Endothelial cell of umbilical vein (primary cell): ENCODE measurements at regions of chr15 and their contacts with region 1.

Region 1: DNA sequence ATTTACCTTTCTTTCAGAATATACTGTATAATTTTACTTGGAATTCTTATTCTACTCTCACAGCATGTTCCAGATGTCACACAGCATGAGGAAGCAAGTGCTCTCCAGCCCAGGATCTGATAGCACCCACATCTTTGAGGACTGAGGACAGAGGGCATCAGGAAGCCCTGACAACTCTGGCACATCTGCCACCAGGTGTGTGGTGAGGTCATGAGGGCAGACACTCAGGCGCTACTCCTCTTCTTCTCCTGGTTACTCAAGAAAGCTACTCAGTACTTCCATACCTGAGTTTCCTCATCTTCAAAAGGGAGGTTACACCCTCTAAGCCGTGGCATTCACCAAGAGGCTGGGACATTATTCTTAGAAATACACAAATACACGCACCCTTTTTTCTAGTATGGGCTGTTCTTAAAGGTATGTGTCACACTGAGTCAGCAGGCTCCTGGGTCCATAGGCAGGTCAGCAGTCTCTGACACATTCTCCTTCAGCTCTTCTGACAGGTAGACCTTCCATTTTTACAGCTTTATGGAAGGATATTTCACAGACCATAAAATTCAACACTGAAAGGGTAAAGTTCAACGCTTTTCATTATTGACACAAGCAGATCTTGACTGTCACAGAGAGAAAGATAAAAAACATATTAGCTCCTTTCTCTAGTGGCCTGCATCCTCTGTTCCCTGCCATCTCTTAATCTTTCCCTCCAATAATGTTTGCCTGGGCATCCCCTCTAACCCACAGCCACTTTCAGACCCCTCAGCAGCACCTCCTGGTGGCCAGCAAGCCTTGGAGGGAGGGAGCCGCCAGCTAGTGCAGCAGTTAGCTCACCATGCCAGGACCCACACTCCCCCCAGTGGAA is 103.2 kb upstream of the TJP1 start:
- DNase-seq: peak; percentile 72
- H3K4me3 ChIP-seq: no peak overlapping the region
- H3K27ac ChIP-seq: no peak overlapping the region
- H3K4me1 ChIP-seq: peaks cover 12% of the 10 kb centered on the region
- H3K27me3 ChIP-seq: no peaks in the 10 kb centered on the region
- CTCF ChIP-seq: peak; percentile 88 to 90
- POLR2A ChIP-seq: no peak

Region 2: DNA sequence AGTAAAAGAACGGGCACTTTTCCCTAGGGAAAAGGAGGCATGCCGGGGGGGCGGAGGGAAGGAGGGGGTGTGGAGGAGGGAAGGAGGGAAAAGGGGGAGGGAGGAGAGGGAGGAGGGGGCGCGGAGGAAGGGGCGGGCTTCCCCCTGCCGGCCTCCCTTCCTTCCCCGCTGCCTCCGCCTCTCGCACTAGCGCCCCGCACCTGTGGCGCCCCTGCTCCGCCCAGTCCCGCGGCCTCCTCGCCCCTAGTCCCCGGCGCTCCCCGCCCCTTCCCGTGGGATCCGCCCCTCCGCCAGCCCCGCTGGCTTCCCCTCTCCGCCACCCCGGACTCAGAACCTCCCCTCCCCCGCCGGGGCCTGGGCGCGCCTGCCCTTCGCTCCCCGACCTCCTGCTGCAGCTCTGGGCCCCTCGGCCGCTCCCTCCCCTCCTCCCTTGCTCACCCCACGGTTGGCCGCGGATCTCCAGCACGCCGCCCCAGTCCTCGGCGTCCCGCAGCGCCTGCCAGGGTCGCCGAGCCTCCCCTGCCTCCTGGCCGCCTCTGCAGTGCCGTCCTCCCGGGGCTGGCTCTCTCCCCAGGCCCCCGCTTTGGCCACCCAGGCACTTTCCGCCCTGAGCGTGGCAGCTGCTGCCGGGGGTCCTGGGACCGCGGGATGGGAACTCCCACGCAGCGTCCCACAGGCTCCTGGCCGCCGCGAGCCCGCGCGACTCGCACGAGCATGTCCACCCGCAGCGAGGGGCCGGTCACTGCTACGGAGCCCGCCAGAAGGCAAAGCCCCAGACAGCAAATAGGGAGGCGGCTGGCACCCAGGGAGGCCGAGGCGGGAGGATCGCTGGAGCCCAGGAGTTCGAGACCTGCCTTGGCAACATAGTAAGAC is 250.6 kb before region 1 on chr15:
- CTCF ChIA-PET with region 1: interaction called, 5 read pairs
- POLR2A ChIA-PET with region 1: no interaction called
- dilution Hi-C with region 1: no loop called
- intact Hi-C with region 1: loop called (anchors 5 kb)
- DNase-seq: peak; percentile 45
- H3K4me3 ChIP-seq: peak overlapping the region; percentile 49 to 78 (median 62)
- H3K27ac ChIP-seq: peak overlapping the region; percentile 17
- H3K4me1 ChIP-seq: peaks cover 13% of the 10 kb centered on the region
- H3K27me3 ChIP-seq: no peaks in the 10 kb centered on the region
- CTCF ChIP-seq: no peak
- POLR2A ChIP-seq: no peak

Region 3: GRCh38 chr15:29704950-29705597 is 220.4 kb before region 1 on chr15:
- CTCF ChIA-PET with region 1: no interaction called
- POLR2A ChIA-PET with region 1: no interaction called
- dilution Hi-C with region 1: no loop called
- intact Hi-C with region 1: no loop called
- DNase-seq: no peak
- H3K4me3 ChIP-seq: no peak overlapping the region
- H3K27ac ChIP-seq: no peak overlapping the region
- H3K4me1 ChIP-seq: no peaks in the 10 kb centered on the region
- H3K27me3 ChIP-seq: no peaks in the 10 kb centered on the region
- CTCF ChIP-seq: no peak
- POLR2A ChIP-seq: no peak

Region 4: DNA sequence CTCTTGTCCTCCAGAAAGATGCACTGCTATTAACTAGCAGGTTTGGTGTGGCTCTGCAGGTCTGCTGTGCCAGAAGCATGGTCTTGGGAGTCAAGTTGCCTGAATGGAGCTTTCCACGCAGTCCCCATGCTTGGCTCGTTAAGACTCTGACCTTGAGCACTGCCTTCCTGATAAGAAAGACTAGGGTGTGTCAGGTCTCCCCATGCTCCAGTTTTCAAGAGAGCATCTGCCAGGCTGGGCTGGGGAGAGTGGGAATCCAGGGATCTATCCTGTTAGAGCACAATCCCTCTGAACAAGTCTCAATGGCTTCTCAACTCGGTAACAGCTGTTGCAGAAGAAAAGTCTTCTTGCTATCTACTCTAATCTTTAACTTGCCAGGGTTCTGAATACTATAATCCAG is 201.4 kb before region 1 on chr15:
- CTCF ChIA-PET with region 1: interaction called, 15 read pairs
- POLR2A ChIA-PET with region 1: no interaction called
- dilution Hi-C with region 1: no loop called
- intact Hi-C with region 1: no loop called
- DNase-seq: no peak
- H3K4me3 ChIP-seq: no peak overlapping the region
- H3K27ac ChIP-seq: no peak overlapping the region
- H3K4me1 ChIP-seq: no peaks in the 10 kb centered on the region
- H3K27me3 ChIP-seq: no peaks in the 10 kb centered on the region
- CTCF ChIP-seq: no peak
- POLR2A ChIP-seq: no peak

Region 5: GRCh38 chr15:29765898-29766527 is 159.4 kb before region 1 on chr15:
- CTCF ChIA-PET with region 1: interaction called, 11 read pairs
- POLR2A ChIA-PET with region 1: no interaction called
- dilution Hi-C with region 1: no loop called
- intact Hi-C with region 1: no loop called
- DNase-seq: no peak
- H3K4me3 ChIP-seq: no peak overlapping the region
- H3K27ac ChIP-seq: no peak overlapping the region
- H3K4me1 ChIP-seq: no peaks in the 10 kb centered on the region
- H3K27me3 ChIP-seq: no peaks in the 10 kb centered on the region
- CTCF ChIP-seq: no peak
- POLR2A ChIP-seq: no peak

Region 6: DNA sequence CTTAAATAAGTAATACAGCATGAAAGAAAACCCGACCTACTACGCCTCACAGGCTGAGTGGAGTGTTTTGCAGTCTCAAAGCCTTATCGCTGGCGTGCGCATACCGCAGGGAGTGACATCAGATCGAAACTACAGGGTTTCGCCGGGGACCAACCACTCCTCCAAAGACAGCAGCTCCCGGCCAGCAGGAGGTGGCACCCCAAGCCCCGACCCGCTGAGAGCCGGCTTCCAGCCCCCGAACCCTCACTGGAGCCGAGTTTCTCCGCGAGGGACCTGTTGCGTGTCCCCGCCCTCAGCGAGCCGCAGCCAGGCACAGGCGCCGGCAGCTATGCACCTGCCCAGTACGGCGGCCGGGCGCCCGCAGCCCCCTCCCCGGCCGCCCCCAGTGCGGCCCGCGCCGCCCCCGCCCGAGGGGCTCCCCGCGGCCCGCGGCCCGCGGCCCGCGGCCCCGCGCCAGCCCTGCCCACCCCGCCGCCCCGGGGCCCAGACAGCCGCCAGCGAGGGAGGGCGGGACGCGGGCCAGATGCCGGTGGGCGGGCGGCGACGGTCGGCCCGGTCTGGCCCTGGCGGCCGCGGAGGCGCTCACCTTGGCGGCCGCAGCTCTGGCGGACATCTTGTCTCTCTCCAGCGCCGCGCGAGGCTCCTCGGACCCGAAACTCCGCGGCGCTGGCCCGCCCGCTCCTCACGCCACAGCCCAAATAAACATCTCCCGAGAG is 103.9 kb before region 1 on chr15:
- CTCF ChIA-PET with region 1: interaction called, 40 read pairs
- POLR2A ChIA-PET with region 1: interaction called, 5 read pairs
- dilution Hi-C with region 1: no loop called
- intact Hi-C with region 1: loop called (anchors 1 kb)
- DNase-seq: peak; percentile 89
- H3K4me3 ChIP-seq: peak overlapping the region; percentile 98 to 100 (median 99)
- H3K27ac ChIP-seq: peak overlapping the region; percentile 94
- H3K4me1 ChIP-seq: peaks cover 45% of the 10 kb centered on the region
- H3K27me3 ChIP-seq: peaks cover 0 to 3% of the 10 kb centered on the region in 2 experiments
- CTCF ChIP-seq: peak; percentile 9 to 46
- POLR2A ChIP-seq: no peak

Region 7: DNA sequence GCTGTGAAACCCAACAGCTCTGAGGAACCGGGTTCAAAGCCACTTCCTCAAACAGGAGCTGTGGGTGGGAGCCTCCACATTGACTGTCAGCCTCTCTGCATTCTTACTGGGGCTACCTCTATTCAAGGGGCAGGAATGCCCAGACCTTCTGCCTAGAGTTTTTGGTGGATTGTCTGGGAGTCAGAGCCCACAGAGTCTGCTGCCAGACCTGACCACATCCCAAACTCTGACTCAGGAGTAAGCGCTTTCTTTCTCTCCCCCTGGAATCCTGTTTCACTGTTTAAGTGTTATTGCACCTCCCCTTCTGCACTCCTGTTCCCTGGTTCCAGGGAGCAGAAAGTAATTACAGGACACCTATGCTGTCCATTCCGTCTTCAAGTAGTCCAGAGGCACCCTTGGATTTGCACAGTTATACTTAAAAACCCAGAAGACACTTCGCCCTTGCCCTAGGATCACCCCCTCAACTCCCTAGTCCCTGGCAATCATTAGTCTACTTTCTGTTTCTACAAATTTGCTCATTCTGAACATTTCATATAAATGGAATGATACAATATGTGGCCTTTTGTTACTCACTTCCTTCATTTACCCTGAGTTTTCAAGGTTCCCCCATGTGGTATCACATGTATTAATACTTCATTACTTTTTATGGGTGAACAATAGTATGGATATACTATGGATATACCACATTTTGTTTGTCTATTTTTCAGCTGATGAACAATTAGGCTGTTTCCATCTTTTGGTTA is 65.3 kb before region 1 on chr15:
- CTCF ChIA-PET with region 1: interaction called, 15 read pairs
- POLR2A ChIA-PET with region 1: no interaction called
- dilution Hi-C with region 1: no loop called
- intact Hi-C with region 1: no loop called
- DNase-seq: no peak
- H3K4me3 ChIP-seq: no peak overlapping the region
- H3K27ac ChIP-seq: no peak overlapping the region
- H3K4me1 ChIP-seq: no peaks in the 10 kb centered on the region
- H3K27me3 ChIP-seq: peaks cover 0 to 2% of the 10 kb centered on the region in 2 experiments
- CTCF ChIP-seq: no peak
- POLR2A ChIP-seq: no peak

Region 8: DNA sequence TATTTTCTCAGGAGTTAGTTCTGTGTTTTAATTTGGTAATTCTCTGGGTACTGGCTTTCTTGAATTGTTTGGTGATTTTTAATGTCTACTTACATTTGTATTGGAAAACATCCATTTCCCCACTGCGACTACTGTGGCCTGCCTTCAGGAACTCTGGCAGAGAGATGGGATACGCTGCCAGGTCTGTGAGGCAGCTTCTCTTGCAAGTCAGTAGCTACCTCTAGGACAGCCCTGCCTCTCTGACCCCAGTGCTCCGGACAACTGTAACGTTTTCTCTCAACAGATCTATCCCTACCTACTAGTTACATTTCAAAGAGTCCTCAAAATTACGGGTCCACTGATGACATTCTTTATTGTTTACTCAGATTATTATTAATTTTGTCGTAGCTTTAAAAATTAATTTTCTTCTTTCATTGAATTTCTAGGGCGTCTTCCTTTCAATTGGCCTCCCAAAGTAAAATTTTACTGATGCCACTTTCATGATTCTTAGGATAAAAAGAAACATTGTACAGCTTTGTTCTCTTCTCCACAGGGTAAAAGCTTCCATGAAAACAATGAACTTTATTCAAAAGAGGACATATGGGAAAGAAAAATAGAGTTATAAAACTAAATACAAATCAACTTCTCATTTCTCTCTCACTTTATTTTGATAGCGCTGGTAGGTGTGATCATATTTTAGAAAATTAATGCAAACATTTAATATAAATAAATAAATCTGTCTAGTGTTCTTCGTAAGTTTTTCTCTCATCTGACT is 34.1 kb after region 1 on chr15:
- CTCF ChIA-PET with region 1: no interaction called
- POLR2A ChIA-PET with region 1: no interaction called
- dilution Hi-C with region 1: no loop called
- intact Hi-C with region 1: no loop called
- DNase-seq: no peak
- H3K4me3 ChIP-seq: no peak overlapping the region
- H3K27ac ChIP-seq: no peak overlapping the region
- H3K4me1 ChIP-seq: no peaks in the 10 kb centered on the region
- H3K27me3 ChIP-seq: peaks cover 5 to 6% of the 10 kb centered on the region in 2 experiments
- CTCF ChIP-seq: no peak
- POLR2A ChIP-seq: no peak

Region 9: GRCh38 chr15:30073915-30074314 is 148.5 kb after region 1 on chr15:
- CTCF ChIA-PET with region 1: interaction called, 17 read pairs
- POLR2A ChIA-PET with region 1: no interaction called
- dilution Hi-C with region 1: no loop called
- intact Hi-C with region 1: no loop called
- DNase-seq: no peak
- H3K4me3 ChIP-seq: no peak overlapping the region
- H3K27ac ChIP-seq: no peak overlapping the region
- H3K4me1 ChIP-seq: no peaks in the 10 kb centered on the region
- H3K27me3 ChIP-seq: peaks cover 1 to 2% of the 10 kb centered on the region in 2 experiments
- CTCF ChIP-seq: no peak
- POLR2A ChIP-seq: no peak